Posterior vena cava (tissue), 2 donors: ENCODE measurements at regions of chr16 and their contacts with region 1.

Region 1: GRCh38 chr16:1194665-1195392 is 30.2 kb downstream of the TPSG1 start:
- DNase-seq: no peak

Region 2: GRCh38 chr16:1105888-1106620 is 88.8 kb before region 1 on chr16:
- intact Hi-C with region 1: loop called (anchors 2 kb)
- DNase-seq: no peak

Region 3: DNA sequence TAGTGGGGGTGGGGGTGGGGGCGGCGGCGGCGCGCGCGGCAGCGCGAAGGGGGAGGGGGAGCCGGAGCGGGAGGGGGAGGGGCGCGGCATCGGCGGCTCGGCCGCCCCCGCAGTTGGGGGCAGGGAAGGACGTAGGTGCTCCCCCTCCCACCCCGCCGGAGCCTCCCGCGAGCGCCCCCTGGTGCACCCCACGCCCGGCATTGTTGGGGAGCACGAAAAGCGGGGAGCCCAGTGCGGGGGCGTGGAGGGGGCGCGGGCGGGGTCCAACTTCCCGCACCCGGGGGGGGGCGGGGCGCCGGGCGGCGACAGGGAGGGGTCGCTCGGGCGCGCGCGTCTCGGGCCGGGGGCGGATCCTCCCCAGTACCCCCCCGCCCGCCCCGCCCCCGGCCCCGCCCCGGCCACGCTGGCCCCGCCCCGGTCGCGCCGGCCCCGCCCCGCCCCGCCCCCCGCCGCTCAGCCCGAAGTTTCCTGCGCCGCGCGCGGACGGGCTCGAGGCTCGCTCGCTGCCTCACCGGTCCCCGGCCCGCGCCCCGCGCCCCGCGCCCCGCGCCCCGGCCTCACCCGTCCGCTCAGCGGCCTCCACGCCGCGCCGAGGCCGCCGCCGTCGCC is 42.1 kb before region 1 on chr16 and contains the start of gene CACNA1H:
- intact Hi-C with region 1: loop called in 1 of 2 experiments (anchors 5 kb)
- DNase-seq: no peak
- total RNA-seq, gene CACNA1H: 67.3 to 79.2 TPM